ENCODE measurements at regions of chr1 and their contacts with region 1.

Region 1: DNA sequence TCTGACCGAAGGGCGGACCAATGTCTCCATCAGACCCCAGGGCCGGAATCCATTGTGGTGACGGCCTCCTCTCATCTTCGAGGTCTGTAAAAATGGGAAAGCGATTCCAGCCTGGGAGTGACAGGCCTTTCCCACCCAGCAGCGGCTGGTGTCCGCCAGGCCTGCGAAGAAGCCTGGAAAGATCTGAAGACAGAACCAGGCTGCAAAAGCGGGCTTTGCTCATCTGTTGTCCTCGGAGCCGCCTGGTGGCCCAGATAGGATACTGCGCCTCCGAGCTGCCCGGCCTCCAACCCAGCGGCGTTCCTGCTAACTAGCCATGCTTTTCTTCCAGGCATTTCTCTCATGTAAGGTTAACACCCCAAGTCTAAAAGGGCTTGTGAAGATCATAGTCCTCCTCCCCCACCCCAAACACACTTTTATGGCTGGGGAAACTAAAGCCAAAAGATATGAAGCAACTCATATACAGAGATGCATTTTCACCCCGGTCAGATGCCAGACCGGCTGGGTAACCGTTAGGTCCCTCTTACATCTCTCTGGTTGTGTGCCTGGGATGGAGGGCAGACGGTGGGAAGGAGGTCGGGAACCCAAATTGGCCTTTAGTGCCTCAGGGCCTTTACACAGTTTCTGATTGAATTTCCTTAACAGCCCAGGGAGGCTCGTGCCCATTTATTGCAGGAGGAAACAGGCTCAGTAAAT is 1.9 kb upstream of the DHRS3 start:
- DNase-seq: peak; percentile 69 to 77 (median 73)
- H3K4me3 ChIP-seq: peak overlapping the region; percentile 87 to 90
- H3K4me3 Mint-ChIP-seq: peak overlapping the region; percentile 97 to 99 (median 98)
- H3K27ac ChIP-seq: peak overlapping the region; percentile 74
- H3K27ac Mint-ChIP-seq: peak overlapping the region; percentile 64 to 99 (median 76)
- H3K4me1 ChIP-seq: peaks cover 39% of the 10 kb centered on the region
- H3K4me1 Mint-ChIP-seq: peaks cover 18 to 56% (median 37%) of the 10 kb centered on the region in 4 donors
- H3K27me3 ChIP-seq: no peaks in the 10 kb centered on the region
- H3K27me3 Mint-ChIP-seq: peaks cover 0 to 2% of the 10 kb centered on the region in 2 donors

Region 2: DNA sequence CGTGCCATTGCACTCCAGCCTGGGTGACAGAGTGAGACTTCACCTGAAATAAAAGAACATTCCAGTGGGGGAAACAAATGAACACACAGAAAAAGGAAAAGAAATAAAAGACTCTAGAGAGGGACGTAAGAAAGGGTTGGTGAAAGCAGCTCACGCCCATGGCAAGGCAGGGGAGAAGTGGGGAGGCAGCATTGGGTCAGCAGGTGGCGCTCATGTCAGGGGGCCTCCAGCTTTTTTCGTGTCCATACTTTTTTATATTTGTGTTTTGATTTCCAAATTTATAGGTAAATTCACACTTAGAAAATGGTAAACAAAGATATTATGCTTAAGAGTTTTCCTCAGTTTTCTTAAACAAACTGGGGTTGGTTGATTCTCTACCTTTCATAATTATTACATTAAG is 344.6 kb before region 1 on chr1:
- CTCF ChIA-PET with region 1: interaction called, 15 read pairs
- POLR2A ChIA-PET with region 1: no interaction called
- intact Hi-C with region 1: loop called (anchors 1 kb)
- DNase-seq: peak in 4 of 5 donors; percentile 7 to 19 (median 14)
- H3K4me3 ChIP-seq: no peak overlapping the region
- H3K4me3 Mint-ChIP-seq: no peak overlapping the region
- H3K27ac ChIP-seq: no peak overlapping the region
- H3K27ac Mint-ChIP-seq: peak overlapping the region in 1 of 7 donors; percentile 82
- H3K4me1 ChIP-seq: no peaks in the 10 kb centered on the region
- H3K4me1 Mint-ChIP-seq: peaks cover 5 to 9% (median 8%) of the 10 kb centered on the region in 4 donors
- H3K27me3 ChIP-seq: no peaks in the 10 kb centered on the region
- H3K27me3 Mint-ChIP-seq: no peaks in the 10 kb centered on the region

Region 3: DNA sequence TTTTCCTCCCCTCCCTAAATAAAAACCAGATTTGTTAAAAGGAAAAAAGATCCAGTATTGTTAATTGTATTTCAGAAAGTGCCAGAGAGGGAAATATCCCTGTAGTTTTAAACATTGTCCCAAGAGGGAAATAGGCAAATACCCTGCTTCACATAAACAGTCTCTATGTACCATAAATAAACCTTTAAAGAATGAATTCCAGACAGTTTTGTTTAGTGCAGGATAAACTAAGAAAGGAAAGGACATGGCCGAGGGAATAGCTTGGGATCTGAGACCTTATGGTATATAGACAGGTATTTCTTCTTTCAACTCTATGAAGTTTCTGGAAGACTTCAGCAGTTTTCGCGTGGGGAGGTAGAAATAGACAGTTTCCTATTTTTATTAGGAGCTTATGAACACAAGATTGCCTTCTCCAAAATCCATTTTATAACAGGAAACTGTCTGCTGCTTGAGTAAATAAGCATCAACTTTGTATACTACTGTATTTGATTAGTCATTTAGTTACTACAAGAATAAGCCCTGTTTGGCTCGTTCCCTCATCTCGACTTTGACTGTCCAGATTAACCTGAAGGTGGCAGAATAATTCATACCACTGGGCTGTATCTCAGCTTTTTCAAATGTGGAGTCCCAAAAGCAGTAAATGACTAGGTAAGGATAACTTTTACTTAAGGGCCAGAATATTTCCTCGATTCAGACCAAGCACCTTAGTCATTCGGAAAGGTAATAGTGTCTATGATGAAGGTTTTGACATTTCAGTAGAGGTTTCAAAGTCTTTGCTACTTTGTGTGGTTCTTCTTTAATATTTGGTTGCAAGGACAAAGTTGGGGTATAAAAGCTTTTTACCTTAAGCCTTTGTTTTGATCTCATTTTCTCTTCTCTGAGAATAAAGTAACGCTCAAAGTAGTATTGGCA is 212.6 kb before region 1 on chr1:
- CTCF ChIA-PET with region 1: interaction called, 28 read pairs
- POLR2A ChIA-PET with region 1: interaction called, 15 read pairs
- intact Hi-C with region 1: loop called (anchors 1 kb)
- DNase-seq: peak in 3 of 5 donors; percentile 25 to 31 (median 27)
- H3K4me3 ChIP-seq: no peak overlapping the region
- H3K4me3 Mint-ChIP-seq: no peak overlapping the region
- H3K27ac ChIP-seq: no peak overlapping the region
- H3K27ac Mint-ChIP-seq: peak overlapping the region in 2 of 7 donors; percentile 58 to 72
- H3K4me1 ChIP-seq: no peaks in the 10 kb centered on the region
- H3K4me1 Mint-ChIP-seq: peaks cover 0 to 10% (median 8%) of the 10 kb centered on the region in 4 donors
- H3K27me3 ChIP-seq: no peaks in the 10 kb centered on the region
- H3K27me3 Mint-ChIP-seq: no peaks in the 10 kb centered on the region

Region 4: DNA sequence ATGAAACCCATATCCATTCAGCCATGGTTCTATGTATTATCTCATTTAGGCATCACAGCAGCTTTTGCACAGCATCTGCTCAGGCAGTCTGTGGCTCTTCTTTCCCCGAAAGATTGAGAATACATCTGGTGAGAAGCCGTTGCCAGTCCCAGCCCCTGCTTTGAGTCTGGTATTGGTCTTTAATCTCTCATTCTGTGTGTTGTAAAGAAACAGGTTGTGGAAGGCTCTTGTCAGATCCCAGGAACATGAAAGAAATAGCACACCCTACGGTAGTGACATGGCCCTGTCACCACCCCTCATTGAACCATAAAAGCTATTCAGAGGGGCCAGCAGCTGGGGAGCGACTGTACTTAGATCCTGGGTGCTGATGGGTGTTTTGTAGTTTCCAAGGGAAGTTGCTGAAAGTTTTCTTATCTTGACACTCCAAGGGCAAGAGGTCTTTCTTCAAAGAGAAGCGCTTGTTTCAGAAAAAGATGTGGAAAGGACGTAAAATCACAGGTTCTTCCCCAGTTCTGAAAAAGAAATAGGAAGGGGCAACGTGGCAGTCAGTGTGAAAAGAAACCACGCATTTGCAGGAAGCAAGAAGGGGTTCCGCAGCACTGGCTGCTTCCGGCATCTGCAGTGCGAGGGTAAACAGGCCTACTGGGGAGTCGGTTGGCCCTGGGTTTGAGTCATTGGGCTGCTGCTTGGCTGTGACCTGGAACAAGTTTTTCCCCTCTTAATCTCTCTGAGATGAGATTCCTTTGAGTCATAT is 147.0 kb before region 1 on chr1:
- CTCF ChIA-PET with region 1: interaction called, 4 read pairs
- POLR2A ChIA-PET with region 1: interaction called, 32 read pairs
- intact Hi-C with region 1: no loop called
- DNase-seq: peak; percentile 30 to 71 (median 45)
- H3K4me3 ChIP-seq: peak overlapping the region in 1 of 2 donors; percentile 23
- H3K4me3 Mint-ChIP-seq: peak overlapping the region; percentile 72 to 85 (median 84)
- H3K27ac ChIP-seq: peak overlapping the region; percentile 51
- H3K27ac Mint-ChIP-seq: peak overlapping the region; percentile 93 to 98 (median 95)
- H3K4me1 ChIP-seq: peaks cover 79% of the 10 kb centered on the region
- H3K4me1 Mint-ChIP-seq: peaks cover 54 to 91% (median 70%) of the 10 kb centered on the region in 4 donors
- H3K27me3 ChIP-seq: no peaks in the 10 kb centered on the region
- H3K27me3 Mint-ChIP-seq: no peaks in the 10 kb centered on the region

Region 5: GRCh38 chr1:12596007-12596821 is 23.7 kb before region 1 on chr1:
- CTCF ChIA-PET with region 1: interaction called, 196 read pairs
- POLR2A ChIA-PET with region 1: interaction called, 327 read pairs
- intact Hi-C with region 1: loop called (anchors 1 kb)
- DNase-seq: no peak
- H3K4me3 ChIP-seq: no peak overlapping the region
- H3K4me3 Mint-ChIP-seq: peak overlapping the region in 4 of 8 donors; percentile 15 to 58 (median 24)
- H3K27ac ChIP-seq: no peak overlapping the region
- H3K27ac Mint-ChIP-seq: no peak overlapping the region
- H3K4me1 ChIP-seq: peaks cover 35% of the 10 kb centered on the region
- H3K4me1 Mint-ChIP-seq: peaks cover 24 to 73% (median 50%) of the 10 kb centered on the region in 4 donors
- H3K27me3 ChIP-seq: no peaks in the 10 kb centered on the region
- H3K27me3 Mint-ChIP-seq: no peaks in the 10 kb centered on the region

Measured in CD4-positive, alpha-beta memory T cell (primary cell).